ENCODE measurements at regions of chr4 and their contacts with region 1.

Region 1: GRCh38 chr4:20544645-20545044 is 155.6 kb upstream of the PACRGL start:
- DNase-seq: no peak
- ATAC-seq: no peak

Region 2: GRCh38 chr4:20422398-20422797 is 122.2 kb before region 1 on chr4:
- intact Hi-C with region 1: loop called (anchors 5 kb)
- DNase-seq: no peak
- ATAC-seq: peak; percentile 62

Region 3: GRCh38 chr4:20639346-20639745 is 94.7 kb after region 1 on chr4:
- intact Hi-C with region 1: no loop called
- DNase-seq: no peak
- ATAC-seq: no peak

Region 4: DNA sequence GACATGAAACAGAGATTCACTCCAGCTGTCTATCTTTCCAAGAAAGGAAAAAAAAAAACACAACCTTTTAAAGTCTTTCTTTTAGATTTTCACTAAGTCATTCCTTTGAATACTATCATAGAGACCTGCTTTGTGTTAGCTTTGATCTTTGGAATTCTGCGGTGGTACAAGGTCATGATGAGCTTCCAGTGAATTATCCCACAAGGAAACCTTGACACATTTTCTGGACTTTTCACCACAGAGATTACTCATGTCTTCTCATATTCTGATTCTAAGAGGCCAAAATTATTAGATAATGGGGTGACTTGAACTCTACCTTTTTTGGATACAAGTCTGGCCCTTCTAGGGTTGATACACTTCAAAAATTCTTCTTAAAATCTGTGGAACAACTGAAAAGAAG is 357.2 kb after region 1 on chr4:
- intact Hi-C with region 1: no loop called
- DNase-seq: no peak
- ATAC-seq: no peak

Measured in Right ventricle myocardium inferior (tissue), 1 donor.